GM13977 (cell line): ENCODE measurements at regions of chr7 and their contacts with region 1.

Region 1: GRCh38 chr7:37201003-37201875 is 247.4 kb downstream of the ELMO1 start:
- DNase-seq: peak; percentile 49
- CTCF ChIP-seq: peak; percentile 86

Region 2: DNA sequence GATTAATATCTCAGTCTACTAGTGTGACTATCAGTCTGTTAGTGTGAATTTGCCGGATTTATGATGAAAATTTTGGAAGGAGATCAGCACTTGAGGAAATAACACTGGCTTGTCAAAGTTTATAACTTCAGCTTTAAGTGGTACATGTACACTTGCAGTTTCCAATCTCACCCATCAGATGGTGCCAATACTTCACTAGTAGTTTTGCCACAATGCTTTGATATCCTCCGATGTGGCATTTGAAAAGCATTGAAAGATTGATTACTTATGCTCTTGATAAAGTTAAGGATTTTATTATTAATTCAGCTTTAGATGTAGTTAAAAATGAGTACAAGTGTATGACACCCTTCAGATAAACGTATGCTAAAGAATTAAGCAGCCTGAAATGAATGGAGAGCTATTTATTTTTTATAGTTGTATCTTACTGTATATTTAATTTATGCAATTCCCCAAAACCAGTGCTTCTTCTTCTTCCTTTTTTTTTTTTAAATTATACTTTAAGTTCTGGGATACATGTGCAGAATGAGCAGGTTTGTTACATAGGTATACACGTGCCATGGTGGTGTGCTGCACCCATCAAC is 713.4 kb before region 1 on chr7:
- in situ Hi-C with region 1: loop called (anchors 25 kb)
- DNase-seq: peak; percentile 38
- CTCF ChIP-seq: peak; percentile 59

Region 3: GRCh38 chr7:36670585-36671431 is 530.4 kb before region 1 on chr7:
- in situ Hi-C with region 1: loop called (anchors 25 kb)
- DNase-seq: peak; percentile 57
- CTCF ChIP-seq: peak; percentile 85

Region 4: DNA sequence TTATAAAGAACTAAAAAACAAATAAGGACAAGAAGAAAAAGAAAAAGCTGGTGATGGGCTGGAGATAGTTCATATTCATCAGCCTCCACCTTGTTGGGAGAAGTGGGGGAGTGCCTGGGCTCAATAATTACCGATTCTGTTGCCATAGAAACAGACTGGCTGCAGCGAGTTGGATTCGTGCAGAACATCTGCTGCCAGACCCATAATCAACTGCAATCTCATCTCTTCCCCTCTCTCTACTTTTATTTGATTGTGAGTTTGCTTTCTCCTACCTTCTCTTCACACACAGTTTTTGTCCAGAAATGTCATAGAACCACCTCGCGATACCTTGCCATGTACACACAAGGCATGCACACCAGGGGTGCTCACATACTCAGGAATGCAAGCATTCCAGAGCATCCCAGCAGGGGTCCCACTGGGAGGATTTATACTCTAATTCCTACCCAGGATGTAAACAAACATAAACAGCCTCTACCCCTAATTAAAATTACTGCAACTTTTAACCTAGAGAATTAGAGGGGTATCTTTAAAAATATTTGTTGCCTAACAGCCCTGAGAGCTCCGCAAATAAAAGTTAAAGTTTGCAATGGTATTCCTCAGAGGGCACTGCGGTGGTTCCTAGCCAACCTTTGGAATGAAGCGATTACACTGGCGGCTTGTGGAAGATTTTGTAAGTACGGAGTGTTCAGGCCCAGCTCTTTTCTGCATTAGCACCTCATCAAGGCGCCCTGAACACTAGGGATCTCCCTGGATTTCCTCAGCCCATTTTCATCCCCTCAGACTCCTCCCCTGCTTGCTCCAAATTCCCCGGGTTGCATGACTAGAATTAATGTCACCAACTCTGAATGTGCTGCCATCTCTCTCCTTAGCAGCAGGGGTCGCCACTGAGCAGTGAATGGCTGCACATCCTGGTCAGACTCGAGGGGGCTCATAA is 214.5 kb before region 1 on chr7:
- in situ Hi-C with region 1: loop called (anchors 25 kb)
- DNase-seq: peak; percentile 65
- CTCF ChIP-seq: peak; percentile 89

Region 5: GRCh38 chr7:37342688-37343471 is 141.6 kb after region 1 on chr7:
- in situ Hi-C with region 1: loop called (anchors 10 kb)
- DNase-seq: no peak
- CTCF ChIP-seq: peak; percentile 33